Spleen (tissue), 13 donors: ENCODE measurements at regions of chr17 and their contacts with region 1.

Region 1: GRCh38 chr17:1787301-1787902 is 25.5 kb downstream of the SERPINF1 start:
- DNase-seq: peak; percentile 42
- H3K4me3 ChIP-seq: no peak overlapping the region
- H3K27ac ChIP-seq: peak overlapping the region in 6 of 8 donors; percentile 10 to 95 (median 61)
- H3K4me1 ChIP-seq: peaks cover 12 to 38% (median 31%) of the 10 kb centered on the region in 6 donors
- H3K27me3 ChIP-seq: no peaks in the 10 kb centered on the region
- CTCF ChIP-seq: no peak
- POLR2A ChIP-seq: no peak

Region 2: DNA sequence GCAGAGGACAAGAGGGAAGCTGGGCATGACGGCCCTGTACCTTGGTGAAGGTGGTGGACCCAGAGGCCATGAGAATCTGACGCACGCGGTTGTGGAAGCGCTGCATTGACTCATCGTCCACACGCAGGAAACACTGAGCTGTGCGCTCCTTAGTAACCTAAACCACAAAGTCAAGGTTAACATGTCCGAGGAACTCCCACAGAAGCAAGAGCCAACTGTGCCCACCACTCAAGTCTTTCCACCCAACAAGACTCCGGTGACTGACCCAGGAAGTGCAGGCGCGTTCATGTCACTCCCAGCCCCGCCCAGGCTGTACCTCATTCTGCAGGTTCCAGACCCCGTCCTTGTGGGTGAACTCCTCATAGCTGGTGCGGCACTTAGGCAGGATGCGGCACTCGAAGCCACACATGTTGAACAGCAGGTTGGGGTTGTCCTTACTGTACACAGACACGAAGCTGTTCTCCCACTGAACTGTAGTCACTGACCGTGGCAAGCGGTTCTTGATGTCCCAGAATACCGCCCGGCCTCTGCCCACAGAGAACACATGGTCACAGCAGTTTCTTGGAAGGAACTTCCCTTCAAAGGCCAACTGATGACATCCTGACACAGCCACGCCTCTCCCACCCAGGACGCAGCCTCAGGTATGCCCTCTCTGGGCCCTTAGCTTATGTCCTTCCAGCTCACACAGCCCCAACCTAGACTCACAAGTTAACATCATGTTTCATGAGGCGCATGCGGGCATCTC is 114.2 kb before region 1 on chr17:
- intact Hi-C with region 1: loop called (anchors 5 kb)
- DNase-seq: no peak
- H3K4me3 ChIP-seq: no peak overlapping the region
- H3K27ac ChIP-seq: peak overlapping the region in 3 of 8 donors; percentile 1 to 60 (median 18)
- H3K4me1 ChIP-seq: peaks cover 12 to 43% (median 20%) of the 10 kb centered on the region in 6 donors
- H3K27me3 ChIP-seq: no peaks in the 10 kb centered on the region
- CTCF ChIP-seq: no peak
- POLR2A ChIP-seq: no peak

Region 3: DNA sequence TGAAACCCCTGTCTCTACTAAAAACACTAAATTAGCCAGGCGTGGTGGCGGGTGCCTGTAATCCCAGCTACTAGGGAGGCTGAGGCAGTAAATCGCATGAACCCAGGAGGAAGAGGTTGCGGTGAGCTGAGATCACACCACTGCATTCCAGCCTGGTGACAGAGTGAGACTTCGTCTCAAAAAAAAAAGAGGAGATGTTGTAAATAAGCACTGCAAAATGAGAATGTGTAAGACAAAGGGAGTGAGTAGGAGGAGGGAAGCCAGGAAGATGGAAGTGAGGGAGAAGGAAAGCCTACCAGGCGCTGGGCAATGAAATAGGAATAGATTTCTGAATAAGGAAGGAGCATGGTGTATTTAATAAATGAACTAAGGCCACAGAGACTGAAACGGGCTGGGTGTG is 94.1 kb before region 1 on chr17:
- intact Hi-C with region 1: no loop called
- DNase-seq: no peak
- H3K4me3 ChIP-seq: no peak overlapping the region
- H3K27ac ChIP-seq: no peak overlapping the region
- H3K4me1 ChIP-seq: no peaks in the 10 kb centered on the region
- H3K27me3 ChIP-seq: no peaks in the 10 kb centered on the region
- CTCF ChIP-seq: no peak
- POLR2A ChIP-seq: no peak